ENCODE measurements at regions of chr9 and their contacts with region 1.

Region 1: DNA sequence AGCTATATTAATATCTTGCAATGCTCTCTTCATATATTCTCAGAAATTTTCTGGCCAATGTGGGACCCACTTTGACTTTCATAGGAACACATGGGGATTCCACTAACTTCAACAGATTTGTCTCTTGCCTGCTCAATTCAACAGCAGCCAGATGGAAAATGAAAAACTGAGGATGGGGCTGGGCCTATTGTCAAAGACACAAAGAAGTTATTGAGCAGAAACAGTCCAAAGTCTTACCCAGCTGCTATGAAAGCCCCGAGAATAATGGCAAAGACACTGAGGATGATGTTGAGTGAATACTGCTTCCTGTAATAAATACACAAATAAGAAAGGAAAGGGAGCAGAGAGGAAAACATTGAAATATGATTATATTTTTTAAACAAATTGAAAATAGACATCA is 32.6 kb downstream of the SLC35D2 start:
- DNase-seq: no peak
- ATAC-seq: no peak
- H3K4me3 ChIP-seq: no peak overlapping the region
- H3K4me3 Mint-ChIP-seq: no peak overlapping the region
- H3K27ac ChIP-seq: no peak overlapping the region
- H3K27ac Mint-ChIP-seq: no peak overlapping the region
- H3K4me1 ChIP-seq: no peaks in the 10 kb centered on the region
- H3K4me1 Mint-ChIP-seq: no peaks in the 10 kb centered on the region
- H3K27me3 ChIP-seq: no peaks in the 10 kb centered on the region
- H3K27me3 Mint-ChIP-seq: no peaks in the 10 kb centered on the region
- CTCF ChIP-seq: no peak

Region 2: GRCh38 chr9:96478829-96479371 is 128.0 kb after region 1 on chr9:
- CTCF ChIA-PET with region 1: no interaction called
- POLR2A ChIA-PET with region 1: no interaction called
- intact Hi-C with region 1: loop called in 1 of 2 experiments (anchors 10 kb)
- DNase-seq: no peak
- ATAC-seq: no peak
- H3K4me3 ChIP-seq: no peak overlapping the region
- H3K4me3 Mint-ChIP-seq: no peak overlapping the region
- H3K27ac ChIP-seq: no peak overlapping the region
- H3K27ac Mint-ChIP-seq: no peak overlapping the region
- H3K4me1 ChIP-seq: no peaks in the 10 kb centered on the region
- H3K4me1 Mint-ChIP-seq: peaks cover 1% of the 10 kb centered on the region
- H3K27me3 ChIP-seq: no peaks in the 10 kb centered on the region
- H3K27me3 Mint-ChIP-seq: no peaks in the 10 kb centered on the region
- CTCF ChIP-seq: no peak

Region 3: GRCh38 chr9:96551403-96551802 is 200.5 kb after region 1 on chr9:
- CTCF ChIA-PET with region 1: no interaction called
- POLR2A ChIA-PET with region 1: no interaction called
- intact Hi-C with region 1: no loop called
- DNase-seq: no peak
- ATAC-seq: no peak
- H3K4me3 ChIP-seq: no peak overlapping the region
- H3K4me3 Mint-ChIP-seq: no peak overlapping the region
- H3K27ac ChIP-seq: no peak overlapping the region
- H3K27ac Mint-ChIP-seq: no peak overlapping the region
- H3K4me1 ChIP-seq: no peaks in the 10 kb centered on the region
- H3K4me1 Mint-ChIP-seq: peaks cover 4% of the 10 kb centered on the region
- H3K27me3 ChIP-seq: no peaks in the 10 kb centered on the region
- H3K27me3 Mint-ChIP-seq: no peaks in the 10 kb centered on the region
- CTCF ChIP-seq: no peak